GM10248 (cell line): ENCODE measurements at regions of chr17 and their contacts with region 1.

Region 1: DNA sequence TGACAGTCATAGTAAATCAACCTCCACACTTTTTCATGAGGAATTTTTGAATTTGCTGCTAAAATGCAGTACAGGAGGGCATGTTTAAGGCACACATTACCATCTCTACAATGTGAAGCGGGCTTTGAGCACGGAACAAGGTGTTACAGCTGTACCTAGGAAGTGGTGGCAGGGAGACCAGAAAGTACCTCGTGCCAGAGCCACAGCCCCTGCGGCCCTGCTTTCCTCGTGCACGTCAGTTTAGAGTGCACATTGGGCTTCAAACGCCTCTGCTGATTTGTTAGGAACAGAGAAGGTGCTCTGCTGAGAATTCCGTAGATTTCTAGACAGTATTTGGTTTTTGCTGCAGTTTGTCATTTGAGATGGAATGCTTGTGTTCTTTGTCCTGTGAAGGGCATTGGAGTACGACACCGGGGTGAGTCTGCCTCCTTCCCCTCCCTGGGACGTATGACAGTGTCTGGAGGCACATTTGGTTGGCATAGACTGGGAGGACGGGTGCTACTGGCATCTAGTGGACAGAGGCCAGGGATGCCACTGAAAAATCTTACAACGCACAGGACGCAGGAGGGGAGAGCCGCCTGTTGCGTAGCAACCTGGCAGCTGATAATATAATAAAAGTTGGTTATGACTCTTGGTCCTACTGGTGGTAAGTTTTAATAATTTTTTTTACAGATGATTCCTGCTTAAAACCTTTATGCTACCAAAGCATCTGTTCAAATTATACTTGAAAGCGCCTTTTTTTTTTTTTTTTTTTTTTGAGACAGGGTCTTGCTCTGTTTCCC is 9.1 kb downstream of the FOXK2 start:
- DNase-seq: no peak
- CTCF ChIP-seq: no peak

Region 2: DNA sequence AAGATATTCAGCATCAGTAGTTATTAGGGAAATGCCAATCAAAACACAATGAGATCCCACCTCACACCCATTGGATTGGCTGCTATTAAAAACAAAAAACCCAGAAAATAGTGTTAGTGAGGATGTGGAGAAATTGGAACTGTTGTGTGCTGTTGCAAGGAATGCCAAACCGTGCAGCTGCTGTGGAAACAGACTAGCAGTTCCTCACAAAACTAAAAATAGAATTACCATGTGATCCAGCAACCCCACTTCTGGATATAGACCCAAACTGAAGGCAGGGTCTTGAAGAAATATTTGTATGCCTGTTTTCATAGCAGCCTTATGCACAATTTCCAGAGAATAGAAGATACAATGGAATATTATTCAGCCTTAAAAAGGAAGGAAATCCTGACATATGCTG is 36.9 kb after region 1 on chr17:
- CTCF ChIA-PET with region 1: no interaction called
- POLR2A ChIA-PET with region 1: no interaction called
- DNase-seq: no peak
- CTCF ChIP-seq: no peak

Region 3: GRCh38 chr17:82636626-82637598 is 108.2 kb after region 1 on chr17:
- CTCF ChIA-PET with region 1: no interaction called
- POLR2A ChIA-PET with region 1: interaction called, 10 read pairs
- DNase-seq: no peak
- CTCF ChIP-seq: no peak